ENCODE measurements at regions of chr7 and their contacts with region 1.

Region 1: GRCh38 chr7:128892521-128893250 is 17.8 kb downstream of the KCP start:
- DNase-seq: peak; percentile 19
- H3K4me3 Mint-ChIP-seq: peak overlapping the region; percentile 45
- H3K27ac Mint-ChIP-seq: peak overlapping the region; percentile 51
- H3K4me1 Mint-ChIP-seq: peaks cover 20% of the 10 kb centered on the region
- H3K27me3 Mint-ChIP-seq: no peaks in the 10 kb centered on the region
- CTCF ChIP-seq: no peak

Region 2: GRCh38 chr7:128904381-128905197 is 11.9 kb after region 1 on chr7:
- CTCF ChIA-PET with region 1: interaction called, 6 read pairs
- POLR2A ChIA-PET with region 1: interaction called, 10 read pairs
- intact Hi-C with region 1: no loop called
- DNase-seq: peak; percentile 71
- H3K4me3 Mint-ChIP-seq: no peak overlapping the region
- H3K27ac Mint-ChIP-seq: no peak overlapping the region
- H3K4me1 Mint-ChIP-seq: peaks cover 9% of the 10 kb centered on the region
- H3K27me3 Mint-ChIP-seq: peaks cover 12% of the 10 kb centered on the region
- CTCF ChIP-seq: peak; percentile 59

Measured in MCF 10A (cell line).